BJ (cell line): ENCODE measurements at regions of chr11 and their contacts with region 1.

Region 1: DNA sequence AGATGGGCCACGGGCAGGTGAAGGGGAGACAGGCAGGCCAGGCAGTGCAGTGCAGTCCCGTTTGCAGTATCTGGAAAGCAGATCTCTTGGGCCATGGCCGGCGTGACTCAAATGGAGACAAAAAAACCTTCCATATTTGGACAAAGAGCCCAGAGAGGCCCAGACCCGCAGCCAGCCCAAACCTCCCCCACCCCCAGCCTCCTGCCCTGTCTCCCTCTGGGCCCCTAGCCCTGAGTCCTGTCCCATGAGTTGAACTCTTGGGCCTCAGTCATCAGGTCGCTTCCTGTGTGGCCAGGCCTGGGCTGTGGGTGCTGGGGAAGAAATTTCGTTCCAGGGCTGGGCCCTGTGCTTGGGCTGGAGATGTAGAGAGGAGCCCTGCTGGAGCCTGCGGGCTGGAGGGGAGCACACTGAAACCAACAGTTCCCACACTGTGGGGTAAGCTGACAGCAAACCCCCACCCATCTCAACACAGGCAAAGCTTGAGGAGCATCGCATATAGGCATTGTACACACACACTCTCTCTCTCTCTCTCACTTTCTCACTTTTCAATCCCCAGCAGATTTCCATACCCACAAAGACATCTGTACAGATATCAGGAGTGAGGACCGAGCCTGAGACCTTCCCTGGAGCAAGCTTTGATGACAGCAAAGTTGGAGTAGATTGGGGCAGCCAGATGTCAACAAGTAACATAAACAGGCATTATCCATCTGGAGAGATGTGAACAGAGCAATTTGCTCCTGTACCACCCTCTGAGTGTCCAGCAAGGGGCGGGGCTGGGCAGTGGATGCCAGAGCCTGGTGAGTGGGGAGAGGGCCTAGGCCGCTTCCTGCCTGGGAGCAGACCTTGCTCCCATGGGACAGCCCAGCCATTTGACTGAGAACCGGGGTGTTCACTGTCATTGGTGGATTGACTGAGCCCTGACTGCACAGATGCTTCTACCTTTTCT is 17.2 kb downstream of the ARHGEF17 start:
- DNase-seq: no peak
- H3K4me3 ChIP-seq: no peak overlapping the region
- H3K27me3 ChIP-seq: no peaks in the 10 kb centered on the region
- CTCF ChIP-seq: no peak

Region 2: DNA sequence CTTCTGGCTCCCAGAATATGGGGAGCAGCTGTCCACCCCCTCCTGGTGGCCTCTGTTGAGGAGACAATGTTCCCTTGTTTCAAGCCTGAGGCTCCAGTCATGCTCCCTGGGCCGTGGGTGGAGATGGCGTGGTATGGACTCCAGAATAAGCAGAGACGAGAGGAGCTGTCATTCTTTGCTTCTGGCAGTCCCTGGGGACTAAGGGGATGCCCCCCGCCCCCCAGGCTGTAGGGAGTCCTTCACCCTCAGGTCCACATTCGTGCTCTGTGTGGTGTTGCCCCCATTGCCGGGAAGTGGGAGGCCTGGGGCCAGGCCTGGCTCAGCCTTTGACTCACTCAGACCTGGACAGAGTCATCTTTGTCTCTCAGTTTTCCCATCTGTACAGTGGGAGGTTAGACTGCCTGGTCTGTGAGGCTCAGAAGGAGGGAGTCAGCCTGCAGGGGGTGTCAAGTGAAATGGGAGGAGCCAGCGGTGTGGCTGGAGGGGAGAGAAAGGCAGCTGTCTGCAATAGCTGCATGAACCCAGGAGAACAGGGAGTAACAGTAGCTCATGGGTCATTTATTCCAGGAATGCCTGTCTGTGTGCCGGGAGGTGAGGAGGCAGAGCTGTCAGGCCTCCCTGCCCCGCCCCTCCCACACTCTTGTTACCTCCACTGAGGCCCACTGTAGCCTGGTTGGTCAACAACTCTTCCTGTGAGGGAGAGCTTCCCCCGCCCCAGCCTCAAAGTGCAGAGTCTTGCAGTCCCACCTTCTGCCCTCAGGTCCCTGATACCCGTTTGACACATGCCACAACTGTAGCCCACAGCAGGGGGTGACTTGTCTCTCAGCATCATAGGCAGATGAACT is 11.0 kb before region 1 on chr11:
- CTCF ChIA-PET with region 1: interaction called, 79 read pairs
- POLR2A ChIA-PET with region 1: interaction called, 6 read pairs
- DNase-seq: no peak
- H3K4me3 ChIP-seq: peak overlapping the region; percentile 80
- H3K27me3 ChIP-seq: no peaks in the 10 kb centered on the region
- CTCF ChIP-seq: peak; percentile 23; the same call in 1 of the 2 replicates

Region 3: DNA sequence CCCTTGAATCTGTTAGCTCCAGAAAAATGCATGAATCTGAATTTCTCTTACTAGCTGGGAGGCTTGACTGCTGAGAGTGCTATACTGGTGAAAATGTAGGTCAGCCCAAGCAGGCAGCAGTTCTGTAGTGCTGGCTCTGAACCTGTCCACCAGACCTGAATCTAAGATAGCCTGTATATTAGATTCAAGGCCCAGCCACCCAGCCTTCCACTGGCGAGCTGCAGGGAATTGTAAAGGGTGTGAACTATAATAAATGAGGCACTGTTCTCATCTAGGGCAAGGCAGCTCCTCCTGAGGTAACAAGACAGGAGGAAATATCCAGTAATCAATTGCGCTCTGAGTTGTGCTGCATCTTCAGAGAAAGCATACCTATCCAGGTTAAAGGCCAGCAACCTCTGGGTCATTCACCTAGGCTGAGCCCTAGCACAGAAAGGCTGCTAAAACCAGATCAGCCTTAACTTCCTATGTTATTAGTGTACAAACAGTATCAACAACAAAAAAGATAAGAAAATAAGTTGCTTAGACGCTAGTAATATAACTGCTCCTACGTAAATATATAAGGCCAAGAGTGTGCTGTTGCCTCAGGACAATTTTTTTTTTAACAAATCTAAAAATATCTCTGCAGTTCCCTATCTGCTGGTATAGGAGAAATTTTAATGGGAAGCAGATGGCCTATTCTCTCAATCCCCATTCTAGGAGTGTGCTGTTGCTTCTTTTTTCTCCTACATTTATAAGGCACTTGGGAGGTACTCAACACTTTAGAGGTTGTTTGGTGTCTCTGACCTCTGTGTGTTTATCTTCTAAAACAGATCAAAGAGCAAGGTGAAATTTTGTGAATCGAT is 113.9 kb after region 1 on chr11:
- CTCF ChIA-PET with region 1: no interaction called
- POLR2A ChIA-PET with region 1: no interaction called
- DNase-seq: peak; percentile 21
- H3K4me3 ChIP-seq: no peak overlapping the region
- H3K27me3 ChIP-seq: no peaks in the 10 kb centered on the region
- CTCF ChIP-seq: no peak